Thyroid gland (tissue), 4 donors: ENCODE measurements at regions of chr12 and their contacts with region 1.

Region 1: DNA sequence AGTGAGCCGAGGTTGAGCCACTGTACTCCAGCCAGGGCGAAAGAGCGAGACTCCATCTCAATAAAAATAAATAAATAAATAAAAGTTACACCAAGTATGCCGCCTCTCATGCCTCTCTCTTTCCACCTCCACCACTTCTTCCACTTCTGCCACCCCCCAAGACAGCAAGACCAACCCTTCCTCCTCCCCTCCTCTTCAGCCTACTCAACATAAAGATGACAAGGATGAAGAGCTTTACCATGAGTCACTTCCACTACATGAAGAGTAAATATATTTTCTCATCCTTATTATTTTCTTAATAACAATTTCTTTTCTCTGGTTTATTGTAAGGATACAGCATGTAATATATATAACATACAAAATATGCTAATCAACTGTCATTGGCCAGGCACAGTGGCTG is 3.6 kb upstream of the TMED2 start:
- DNase-seq: no peak
- H3K4me3 ChIP-seq: no peak overlapping the region
- H3K27ac ChIP-seq: no peak overlapping the region
- H3K4me1 ChIP-seq: peaks cover 17 to 21% of the 10 kb centered on the region in 2 donors
- H3K27me3 ChIP-seq: no peaks in the 10 kb centered on the region
- CTCF ChIP-seq: no peak
- POLR2A ChIP-seq: no peak

Region 2: GRCh38 chr12:123388177-123388947 is 192.4 kb before region 1 on chr12:
- intact Hi-C with region 1: loop called (anchors 5 kb)
- DNase-seq: peak; percentile 78 to 82
- H3K4me3 ChIP-seq: peak overlapping the region in 2 of 3 donors; percentile 42 to 46
- H3K27ac ChIP-seq: peak overlapping the region; percentile 78 to 86 (median 81)
- H3K4me1 ChIP-seq: peaks cover 43 to 46% of the 10 kb centered on the region in 2 donors
- H3K27me3 ChIP-seq: no peaks in the 10 kb centered on the region
- CTCF ChIP-seq: peak in 1 of 6 experiments; percentile 32
- POLR2A ChIP-seq: no peak

Region 3: GRCh38 chr12:123478762-123479161 is 102.0 kb before region 1 on chr12:
- intact Hi-C with region 1: no loop called
- DNase-seq: peak; percentile 35 to 66
- H3K4me3 ChIP-seq: no peak overlapping the region
- H3K27ac ChIP-seq: peak overlapping the region; percentile 65 to 82 (median 69)
- H3K4me1 ChIP-seq: peaks cover 21 to 56% of the 10 kb centered on the region in 2 donors
- H3K27me3 ChIP-seq: no peaks in the 10 kb centered on the region
- CTCF ChIP-seq: no peak
- POLR2A ChIP-seq: no peak

Region 4: GRCh38 chr12:123540899-123541662 is 39.7 kb before region 1 on chr12:
- intact Hi-C with region 1: loop called (anchors 5 kb)
- DNase-seq: no peak
- H3K4me3 ChIP-seq: no peak overlapping the region
- H3K27ac ChIP-seq: no peak overlapping the region
- H3K4me1 ChIP-seq: no peaks in the 10 kb centered on the region
- H3K27me3 ChIP-seq: no peaks in the 10 kb centered on the region
- CTCF ChIP-seq: no peak
- POLR2A ChIP-seq: no peak